HEK293 (cell line): ENCODE measurements at regions of chr16 and their contacts with region 1.

Region 1: DNA sequence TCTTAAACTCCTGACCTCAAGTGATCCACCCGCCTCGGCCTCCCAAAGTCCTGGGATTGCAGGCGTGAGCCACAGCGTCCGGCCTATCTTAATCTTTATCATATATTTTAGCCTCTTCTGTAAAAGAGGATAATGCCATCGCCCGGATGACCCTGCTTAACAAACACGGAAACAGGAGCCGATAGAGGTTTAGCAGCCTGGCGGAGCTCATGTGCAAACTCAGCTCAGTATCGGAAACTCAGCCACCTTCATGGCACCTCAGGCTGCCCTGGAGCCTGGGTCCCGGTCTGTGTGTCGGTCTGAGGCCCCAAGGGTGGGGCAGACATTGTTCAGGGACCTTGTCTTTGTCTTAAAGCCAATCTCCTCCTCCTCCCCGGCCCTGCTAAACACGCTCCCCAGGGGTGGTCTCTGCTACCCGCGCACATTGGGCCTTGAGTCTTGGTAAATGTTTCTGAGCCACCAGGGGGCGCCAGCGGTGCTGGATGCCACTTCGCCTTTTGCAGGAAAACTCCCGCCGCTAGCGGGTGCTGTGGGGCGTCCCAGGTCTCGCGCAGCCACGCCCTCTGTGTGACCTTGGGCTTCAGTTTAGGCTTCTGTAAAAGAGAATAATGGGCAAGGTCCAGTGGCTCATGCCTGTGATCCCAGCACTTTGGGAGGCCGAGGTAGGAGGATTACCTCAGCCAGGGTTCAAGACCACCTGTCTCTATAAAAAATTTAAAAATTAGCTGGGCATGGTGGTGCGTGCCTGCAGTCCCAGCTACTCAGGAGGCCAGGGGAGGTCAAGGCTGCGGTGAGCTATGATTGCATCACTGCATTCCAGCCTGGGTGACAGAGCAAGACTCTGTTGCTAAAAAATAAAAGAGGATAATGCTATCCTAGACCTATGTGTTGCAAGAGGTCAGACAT is 2.7 kb downstream of the CETP start:
- H3K4me3 ChIP-seq: no peak overlapping the region
- H3K27ac ChIP-seq: no peak overlapping the region
- H3K4me1 ChIP-seq: no peaks in the 10 kb centered on the region
- CTCF ChIP-seq: peak; percentile 82

Region 2: DNA sequence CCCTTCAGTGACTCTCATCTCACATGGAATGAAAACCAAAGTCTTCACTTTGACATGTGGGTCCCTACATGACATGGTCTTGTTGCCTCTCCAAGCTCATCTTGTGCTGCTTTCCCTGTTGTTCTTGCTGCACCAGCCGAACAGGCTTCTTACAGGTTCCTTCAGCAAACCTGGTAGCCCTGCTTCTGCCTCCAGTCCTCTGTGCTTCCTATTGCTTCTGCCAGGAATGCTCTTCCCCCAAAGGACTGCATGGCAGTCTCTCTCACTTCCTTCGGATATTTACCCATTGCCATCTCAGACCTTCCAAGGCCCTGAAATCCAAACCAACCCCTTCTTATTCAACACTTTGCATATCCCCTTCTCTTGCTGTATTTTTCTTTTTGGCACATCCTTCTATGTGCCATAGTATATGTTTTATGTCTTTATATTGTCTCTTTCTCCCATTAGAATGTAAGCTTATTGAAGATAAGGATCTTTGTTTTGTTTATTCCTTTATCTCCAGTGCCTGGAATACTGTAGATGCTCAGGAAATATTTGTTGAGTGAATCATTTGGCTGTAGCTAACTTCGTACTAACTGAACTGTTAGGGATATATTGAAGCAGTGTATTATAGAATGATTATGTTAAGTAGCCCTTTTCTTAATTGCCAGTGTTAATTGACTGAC is 157.4 kb before region 1 on chr16:
- CTCF ChIA-PET with region 1: no interaction called
- POLR2A ChIA-PET with region 1: no interaction called
- H3K4me3 ChIP-seq: no peak overlapping the region
- H3K27ac ChIP-seq: no peak overlapping the region
- H3K4me1 ChIP-seq: no peaks in the 10 kb centered on the region
- CTCF ChIP-seq: no peak

Region 3: GRCh38 chr16:56944954-56945839 is 19.3 kb before region 1 on chr16:
- CTCF ChIA-PET with region 1: interaction called, 11 read pairs
- POLR2A ChIA-PET with region 1: no interaction called
- H3K4me3 ChIP-seq: no peak overlapping the region
- H3K27ac ChIP-seq: no peak overlapping the region
- H3K4me1 ChIP-seq: no peaks in the 10 kb centered on the region
- CTCF ChIP-seq: no peak

Region 4: DNA sequence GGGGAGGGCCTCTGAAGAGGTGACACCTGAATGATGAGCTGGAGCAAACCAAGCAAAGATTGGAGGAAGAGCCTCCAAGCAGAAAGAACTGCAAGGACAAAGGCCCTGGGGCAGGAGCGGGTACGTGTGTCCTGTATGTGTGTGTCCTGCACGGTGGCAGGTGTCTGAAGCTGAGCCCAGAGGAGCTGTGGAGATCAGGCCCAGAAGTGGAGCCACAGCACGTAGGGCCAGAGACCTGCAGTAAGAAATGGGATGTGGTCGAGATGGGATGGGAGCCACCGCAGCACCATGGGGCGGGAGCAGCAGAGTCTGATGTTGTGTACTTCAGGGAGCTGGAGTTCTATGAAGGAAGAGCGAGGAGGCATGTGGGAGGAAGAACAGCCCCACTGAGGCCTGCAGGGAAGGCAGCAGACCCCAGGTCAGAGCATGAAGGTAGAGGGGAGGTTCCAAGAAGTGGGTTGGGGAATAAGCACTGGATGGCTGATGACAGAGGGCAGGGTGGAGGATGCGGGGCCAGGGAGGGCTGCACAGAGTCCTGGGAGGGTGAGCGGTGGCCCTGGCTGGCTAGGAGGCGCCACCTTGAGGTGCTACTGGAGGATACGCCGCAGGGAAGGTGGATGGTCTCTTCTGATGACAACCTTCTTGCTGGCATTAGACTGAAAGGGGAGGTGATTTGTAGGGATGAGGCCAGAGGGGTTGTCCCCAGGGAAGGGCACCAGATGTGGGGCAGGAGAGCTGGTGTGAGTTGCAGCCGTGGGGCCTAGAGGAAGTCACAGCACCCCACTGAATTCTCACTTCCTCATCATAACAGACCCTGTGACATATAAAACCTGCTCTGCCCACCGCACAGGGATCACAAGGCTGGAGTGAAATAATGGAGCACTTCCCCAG is 13.4 kb before region 1 on chr16:
- CTCF ChIA-PET with region 1: interaction called, 24 read pairs
- POLR2A ChIA-PET with region 1: no interaction called
- H3K4me3 ChIP-seq: no peak overlapping the region
- H3K27ac ChIP-seq: no peak overlapping the region
- H3K4me1 ChIP-seq: no peaks in the 10 kb centered on the region
- CTCF ChIP-seq: peak; percentile 94

Region 5: DNA sequence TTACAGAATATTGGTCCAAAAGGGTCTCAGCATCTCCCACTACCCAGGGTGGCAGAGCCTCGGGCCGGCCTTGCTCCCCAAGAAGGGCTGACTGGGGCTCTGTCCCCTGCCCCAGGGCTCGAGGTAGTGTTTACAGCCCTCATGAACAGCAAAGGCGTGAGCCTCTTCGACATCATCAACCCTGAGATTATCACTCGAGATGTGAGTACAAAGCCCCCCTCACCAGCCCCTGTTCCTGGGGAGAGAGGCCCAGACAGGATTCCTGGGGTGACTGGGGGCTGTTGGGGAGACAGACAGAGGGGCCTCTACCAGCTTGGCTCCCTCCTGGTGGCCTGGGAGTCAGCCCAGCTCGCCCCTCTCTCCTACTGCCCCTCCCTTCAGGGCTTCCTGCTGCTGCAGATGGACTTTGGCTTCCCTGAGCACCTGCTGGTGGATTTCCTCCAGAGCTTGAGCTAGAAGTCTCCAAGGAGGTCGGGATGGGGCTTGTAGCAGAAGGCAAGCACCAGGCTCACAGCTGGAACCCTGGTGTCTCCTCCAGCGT is 18.8 kb after region 1 on chr16:
- CTCF ChIA-PET with region 1: interaction called, 14 read pairs
- POLR2A ChIA-PET with region 1: no interaction called
- H3K4me3 ChIP-seq: no peak overlapping the region
- H3K27ac ChIP-seq: no peak overlapping the region
- H3K4me1 ChIP-seq: no peaks in the 10 kb centered on the region
- CTCF ChIP-seq: no peak

Region 6: DNA sequence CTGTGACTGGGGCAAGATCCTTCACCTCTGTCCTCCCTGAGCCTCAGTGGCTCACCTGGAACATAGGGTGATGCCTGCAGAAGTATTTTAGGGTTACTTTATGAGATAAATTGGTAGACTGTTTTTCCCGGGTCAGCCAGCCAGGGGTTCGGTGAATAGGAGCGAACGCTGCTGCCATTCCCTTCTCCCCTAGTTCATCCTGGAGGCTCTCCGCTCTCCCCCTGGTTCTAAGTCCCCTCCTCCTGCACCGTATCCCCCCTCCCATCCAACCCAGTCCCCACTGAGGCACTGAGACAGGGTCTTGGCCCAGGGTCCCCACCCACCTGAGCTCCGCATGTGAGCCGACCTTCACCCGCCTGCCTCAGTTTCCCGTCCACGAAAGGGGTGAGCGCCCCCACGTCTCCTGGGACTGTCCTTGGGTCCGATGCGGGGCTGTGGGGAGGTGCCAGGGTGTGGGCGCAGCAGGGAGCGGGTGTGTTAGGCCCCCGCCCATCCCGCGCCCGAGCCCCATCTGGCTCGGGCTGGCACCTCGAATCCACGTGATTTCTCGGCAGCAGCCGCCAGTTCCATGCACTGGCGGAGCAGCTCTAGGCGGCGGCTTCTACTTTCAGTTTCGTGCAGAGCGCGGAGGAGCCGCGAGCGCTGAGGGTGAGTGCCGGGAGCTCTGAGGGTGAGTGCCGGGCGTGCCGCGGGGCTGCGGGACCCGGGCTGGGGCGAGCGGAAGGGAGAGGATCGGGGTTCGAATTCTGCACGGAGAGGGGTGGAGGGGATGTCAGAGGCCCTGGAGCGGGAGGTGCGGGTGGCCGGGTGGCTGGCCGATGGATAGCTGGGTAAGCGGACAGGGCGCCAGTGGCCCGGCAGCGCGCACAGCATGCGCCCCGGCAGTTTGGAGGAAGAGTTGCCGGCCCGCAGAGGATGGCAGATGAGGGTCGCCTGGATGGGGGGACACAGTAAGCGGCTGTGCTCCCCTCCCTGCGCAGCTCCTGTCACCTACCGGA is 24.8 kb after region 1 on chr16 and contains the start of gene NLRC5:
- CTCF ChIA-PET with region 1: interaction called, 14 read pairs
- POLR2A ChIA-PET with region 1: interaction called, 8 read pairs
- H3K4me3 ChIP-seq: peak within 1 kb of the TSS; percentile 64
- H3K27ac ChIP-seq: no peak within 1 kb of the TSS; the same call in 1 of the 2 replicates
- H3K4me1 ChIP-seq: peaks cover 4% of the 10 kb centered on the region; the same call in 1 of the 2 replicates
- CTCF ChIP-seq: peak; percentile 51; the same call in 1 of the 2 replicates

Region 7: GRCh38 chr16:57045694-57046381 is 81.3 kb after region 1 on chr16:
- CTCF ChIA-PET with region 1: interaction called, 13 read pairs
- POLR2A ChIA-PET with region 1: no interaction called
- H3K4me3 ChIP-seq: no peak overlapping the region
- H3K27ac ChIP-seq: no peak overlapping the region
- H3K4me1 ChIP-seq: no peaks in the 10 kb centered on the region
- CTCF ChIP-seq: peak; percentile 24; the same call in 1 of the 2 replicates

Region 8: DNA sequence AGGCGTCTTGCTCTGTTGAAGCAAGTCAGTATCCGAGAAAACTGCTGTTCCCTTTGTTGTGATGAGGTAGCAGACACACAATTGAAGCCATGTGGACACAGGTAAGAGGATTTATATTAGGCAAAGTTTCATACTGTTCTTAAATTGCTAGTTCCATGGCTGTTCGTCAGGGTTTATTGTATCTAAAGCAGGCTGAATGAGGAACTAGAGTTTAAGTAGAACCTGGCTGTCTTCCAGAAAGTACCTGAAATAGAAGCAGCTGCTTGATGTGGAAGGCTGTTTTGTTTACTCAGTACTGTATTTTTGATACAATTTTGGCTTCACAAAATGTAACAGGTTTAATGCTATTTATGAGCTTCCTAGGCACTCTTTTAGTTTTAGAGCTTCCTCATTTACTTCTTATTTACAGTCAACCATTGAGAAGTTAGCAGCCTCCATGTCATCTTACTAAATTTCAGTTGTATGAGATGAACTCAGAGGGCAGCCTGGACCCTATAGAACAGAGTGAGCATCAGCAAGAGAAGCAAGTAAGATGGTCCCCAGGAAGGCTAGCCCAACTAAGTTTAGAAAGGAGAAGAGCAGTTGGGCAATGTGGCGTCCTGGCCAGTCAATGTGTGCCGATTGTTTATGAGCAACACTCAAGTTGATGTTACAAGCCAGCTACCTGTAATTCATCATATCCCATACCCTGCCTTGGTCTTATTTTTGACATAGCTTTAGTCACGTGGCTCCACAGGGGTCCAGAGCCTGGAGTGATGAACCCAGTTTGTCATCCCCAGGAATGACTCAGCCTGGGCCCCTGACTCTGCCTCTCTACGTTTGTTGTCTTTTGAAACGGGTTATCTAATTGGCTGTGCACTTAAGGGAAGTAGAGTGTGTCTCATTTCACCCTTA is 270.9 kb after region 1 on chr16:
- CTCF ChIA-PET with region 1: no interaction called
- POLR2A ChIA-PET with region 1: no interaction called
- H3K4me3 ChIP-seq: no peak overlapping the region
- H3K27ac ChIP-seq: no peak overlapping the region
- H3K4me1 ChIP-seq: peaks cover 7% of the 10 kb centered on the region; the same call in 1 of the 2 replicates
- CTCF ChIP-seq: no peak